Brain microvascular endothelial cell (primary cell): ENCODE measurements at regions of chr2 and their contacts with region 1.

Region 1: GRCh38 chr2:216698895-216699294 is 3.5 kb upstream of the IGFBP5 start:
- DNase-seq: peak; percentile 54
- H3K4me3 ChIP-seq: no peak overlapping the region
- H3K27ac ChIP-seq: no peak overlapping the region
- H3K27me3 ChIP-seq: no peaks in the 10 kb centered on the region
- CTCF ChIP-seq: peak; percentile 74

Region 2: DNA sequence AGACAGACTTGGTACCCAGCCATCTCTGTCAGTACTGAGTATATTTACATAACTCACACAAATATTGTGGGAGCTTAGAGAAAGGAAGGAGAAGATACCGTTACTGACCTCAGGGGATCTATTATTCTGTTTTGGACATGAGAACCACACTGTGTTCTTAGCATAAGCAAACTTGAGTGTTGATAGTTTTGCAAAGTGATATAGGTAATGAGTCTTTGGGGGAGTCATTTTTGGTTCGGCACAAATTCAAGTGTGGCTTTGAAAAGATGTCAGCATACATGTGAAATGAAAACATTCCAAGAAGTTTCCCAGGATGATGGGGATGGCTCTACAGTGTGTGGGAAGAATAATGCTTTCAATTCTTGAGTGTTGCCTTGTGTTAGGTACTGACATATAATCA is 262.5 kb before region 1 on chr2:
- in situ Hi-C with region 1: no loop called
- DNase-seq: peak; percentile 31
- H3K4me3 ChIP-seq: no peak overlapping the region
- H3K27ac ChIP-seq: no peak overlapping the region
- H3K27me3 ChIP-seq: no peaks in the 10 kb centered on the region
- CTCF ChIP-seq: no peak

Region 3: DNA sequence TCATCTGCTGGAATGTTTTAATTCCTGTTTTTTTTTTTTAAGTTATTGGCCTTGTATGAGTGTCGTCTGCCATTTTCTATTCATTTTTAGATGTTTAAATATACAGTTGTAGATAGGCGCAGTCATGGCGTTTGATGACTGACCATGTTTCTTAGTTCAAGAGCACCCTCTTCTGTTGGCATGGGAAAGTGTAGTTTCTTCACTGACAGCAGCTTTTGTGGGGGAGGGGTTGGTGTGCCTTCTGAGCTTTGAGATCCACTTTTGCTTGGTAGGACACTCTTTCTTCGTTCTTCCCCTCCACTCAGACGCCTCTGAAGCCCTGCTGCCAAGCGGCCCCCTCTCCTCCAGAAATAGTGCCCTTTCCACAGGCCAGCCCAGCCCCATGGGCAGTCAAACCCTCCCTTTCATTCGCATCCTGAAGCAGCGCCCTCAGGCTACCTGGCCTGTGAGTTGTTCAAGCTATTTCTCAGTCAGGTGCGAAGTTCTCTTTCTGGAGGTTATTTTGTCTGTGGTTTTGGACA is 811.9 kb after region 1 on chr2:
- in situ Hi-C with region 1: loop called (anchors 25 kb)
- DNase-seq: peak; percentile 85
- H3K4me3 ChIP-seq: no peak overlapping the region
- H3K27ac ChIP-seq: no peak overlapping the region
- H3K27me3 ChIP-seq: no peaks in the 10 kb centered on the region
- CTCF ChIP-seq: peak; percentile 85